ENCODE measurements at regions of chr7 and their contacts with region 1.

Region 1: GRCh38 chr7:30750683-30751650 is 968 bp upstream of the INMT start:
- DNase-seq: peak; percentile 89
- H3K4me3 ChIP-seq: no peak overlapping the region
- H3K27ac ChIP-seq: peak overlapping the region; percentile 84
- H3K27me3 ChIP-seq: peaks cover 2% of the 10 kb centered on the region
- CTCF ChIP-seq: no peak

Region 2: GRCh38 chr7:30740424-30741181 is 10.4 kb before region 1 on chr7:
- CTCF ChIA-PET with region 1: interaction called, 40 read pairs
- POLR2A ChIA-PET with region 1: no interaction called
- DNase-seq: peak; percentile 23
- H3K4me3 ChIP-seq: no peak overlapping the region
- H3K27ac ChIP-seq: no peak overlapping the region
- H3K27me3 ChIP-seq: peaks cover 23% of the 10 kb centered on the region
- CTCF ChIP-seq: peak; percentile 99

Region 3: GRCh38 chr7:30869794-30870611 is 119.0 kb after region 1 on chr7:
- CTCF ChIA-PET with region 1: no interaction called
- POLR2A ChIA-PET with region 1: no interaction called
- DNase-seq: no peak
- H3K4me3 ChIP-seq: no peak overlapping the region
- H3K27ac ChIP-seq: no peak overlapping the region
- H3K27me3 ChIP-seq: no peaks in the 10 kb centered on the region
- CTCF ChIP-seq: no peak

Measured in AG04450 (cell line).